Caco-2 (cell line): ENCODE measurements at regions of chr3 and their contacts with region 1.

Region 1: GRCh38 chr3:166283856-166284255 is 446.6 kb upstream of the BCHE start:
- DNase-seq: no peak
- H3K4me3 ChIP-seq: no peak overlapping the region
- H3K4me3 Mint-ChIP-seq: no peak overlapping the region
- H3K27ac Mint-ChIP-seq: no peak overlapping the region
- H3K4me1 ChIP-seq: peaks cover 10% of the 10 kb centered on the region; the same call in 1 of the 2 replicates
- H3K4me1 Mint-ChIP-seq: peaks cover 7% of the 10 kb centered on the region
- H3K27me3 ChIP-seq: no peaks in the 10 kb centered on the region
- H3K27me3 Mint-ChIP-seq: no peaks in the 10 kb centered on the region
- CTCF ChIP-seq: no peak

Region 2: GRCh38 chr3:166205158-166205557 is 78.7 kb before region 1 on chr3:
- CTCF ChIA-PET with region 1: no interaction called
- POLR2A ChIA-PET with region 1: no interaction called
- intact Hi-C with region 1: loop called (anchors 1 kb)
- DNase-seq: peak in 1 of 2 experiments; percentile 16
- H3K4me3 ChIP-seq: no peak overlapping the region
- H3K4me3 Mint-ChIP-seq: peak overlapping the region; percentile 19
- H3K27ac Mint-ChIP-seq: no peak overlapping the region
- H3K4me1 ChIP-seq: peaks cover 7% of the 10 kb centered on the region; the same call in 1 of the 2 replicates
- H3K4me1 Mint-ChIP-seq: no peaks in the 10 kb centered on the region
- H3K27me3 ChIP-seq: no peaks in the 10 kb centered on the region
- H3K27me3 Mint-ChIP-seq: no peaks in the 10 kb centered on the region
- CTCF ChIP-seq: no peak

Region 3: GRCh38 chr3:166433060-166433459 is 149.2 kb after region 1 on chr3:
- CTCF ChIA-PET with region 1: no interaction called
- POLR2A ChIA-PET with region 1: no interaction called
- intact Hi-C with region 1: no loop called
- DNase-seq: no peak
- H3K4me3 ChIP-seq: no peak overlapping the region
- H3K4me3 Mint-ChIP-seq: no peak overlapping the region
- H3K27ac Mint-ChIP-seq: no peak overlapping the region
- H3K4me1 ChIP-seq: no peaks in the 10 kb centered on the region
- H3K4me1 Mint-ChIP-seq: no peaks in the 10 kb centered on the region
- H3K27me3 ChIP-seq: no peaks in the 10 kb centered on the region
- H3K27me3 Mint-ChIP-seq: no peaks in the 10 kb centered on the region
- CTCF ChIP-seq: no peak